Dendritic cell treated with granulocyte-macrophage colony-stimulating factor and Interleukin-4, amounts not matched to agents 40 ng/mL and 50 ng/mL, for 4 days (primary cell): ENCODE measurements at regions of chr16 and their contacts with region 1.

Region 1: DNA sequence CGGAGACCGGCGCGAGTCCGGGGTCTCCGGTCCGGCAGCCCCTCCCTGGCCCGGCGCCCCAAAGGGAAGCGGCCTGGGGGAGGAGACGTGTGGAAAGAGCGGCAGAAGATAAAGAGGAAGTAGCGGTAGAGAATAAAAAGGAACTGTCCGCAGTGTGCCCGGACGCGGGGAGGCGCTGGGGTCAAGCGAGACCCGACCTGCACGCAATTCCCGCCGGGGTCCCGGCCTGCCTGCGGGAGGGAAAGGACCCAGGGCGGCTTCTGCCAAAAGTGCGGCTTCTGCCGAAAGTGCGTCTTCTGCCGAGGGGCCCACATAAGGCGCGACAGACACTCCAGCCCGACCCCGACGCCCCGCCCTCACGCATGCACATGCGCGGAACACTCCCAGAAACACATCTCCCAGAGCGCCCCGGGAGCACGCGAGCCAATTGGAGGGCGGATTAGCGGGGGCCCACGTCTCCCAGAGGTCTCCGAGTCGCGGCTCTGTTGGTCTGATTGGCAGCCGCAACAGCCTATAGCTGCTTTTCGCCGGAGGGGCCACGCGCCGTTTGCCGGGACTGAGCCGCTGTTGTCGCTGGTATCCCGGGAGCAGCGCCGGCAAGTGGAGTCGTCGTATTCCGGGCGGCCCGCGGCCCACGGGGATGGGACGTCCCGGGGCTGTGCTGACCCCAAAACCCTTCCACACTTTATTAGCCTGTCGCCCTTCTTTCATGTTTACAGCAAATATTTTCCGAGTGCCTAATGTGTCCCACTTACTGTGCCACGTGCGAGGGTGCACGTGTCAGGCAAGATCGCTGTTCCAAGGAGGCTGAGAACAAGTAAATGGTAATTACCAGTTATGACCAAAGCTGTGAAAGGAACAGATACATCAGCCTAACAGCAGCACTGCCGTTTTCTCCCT is 8.0 kb upstream of the MEFV start:
- H3K4me3 Mint-ChIP-seq: peak overlapping the region; percentile 82
- H3K27ac Mint-ChIP-seq: peak overlapping the region; percentile 96
- H3K4me1 Mint-ChIP-seq: peaks cover 24% of the 10 kb centered on the region
- H3K27me3 Mint-ChIP-seq: no peaks in the 10 kb centered on the region

Region 2: GRCh38 chr16:3234543-3235541 is 29.5 kb before region 1 on chr16 and contains the start of gene ZNF200:
- intact Hi-C with region 1: loop called (anchors 1 kb)
- H3K4me3 Mint-ChIP-seq: peak within 1 kb of the TSS; percentile 96
- H3K27ac Mint-ChIP-seq: peak within 1 kb of the TSS; percentile 99
- H3K4me1 Mint-ChIP-seq: peaks cover 29% of the 10 kb centered on the region
- H3K27me3 Mint-ChIP-seq: no peaks in the 10 kb centered on the region

Region 3: DNA sequence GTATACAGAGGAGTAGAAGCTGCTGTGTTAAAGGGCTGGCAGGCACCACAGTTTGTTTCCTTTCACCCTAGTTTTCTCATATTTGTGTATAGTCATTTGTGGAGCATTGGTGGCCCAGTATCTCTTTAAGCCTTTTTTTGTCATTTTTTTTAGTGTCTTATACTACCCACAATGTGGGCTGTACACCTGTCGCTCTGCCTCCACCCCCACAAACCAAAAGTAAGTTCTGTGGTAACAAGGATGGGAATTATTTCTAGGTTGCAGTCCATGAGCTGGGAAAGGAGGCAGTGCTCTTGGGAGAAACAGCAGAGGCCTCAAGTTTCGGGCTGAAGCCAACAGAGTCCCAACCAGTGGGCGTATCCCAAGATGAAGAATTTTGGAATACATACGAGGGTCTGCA is 47.1 kb after region 1 on chr16:
- intact Hi-C with region 1: no loop called
- H3K4me3 Mint-ChIP-seq: no peak overlapping the region
- H3K27ac Mint-ChIP-seq: no peak overlapping the region
- H3K4me1 Mint-ChIP-seq: no peaks in the 10 kb centered on the region
- H3K27me3 Mint-ChIP-seq: no peaks in the 10 kb centered on the region